ENCODE measurements at regions of chr17 and their contacts with region 1.

Region 1: DNA sequence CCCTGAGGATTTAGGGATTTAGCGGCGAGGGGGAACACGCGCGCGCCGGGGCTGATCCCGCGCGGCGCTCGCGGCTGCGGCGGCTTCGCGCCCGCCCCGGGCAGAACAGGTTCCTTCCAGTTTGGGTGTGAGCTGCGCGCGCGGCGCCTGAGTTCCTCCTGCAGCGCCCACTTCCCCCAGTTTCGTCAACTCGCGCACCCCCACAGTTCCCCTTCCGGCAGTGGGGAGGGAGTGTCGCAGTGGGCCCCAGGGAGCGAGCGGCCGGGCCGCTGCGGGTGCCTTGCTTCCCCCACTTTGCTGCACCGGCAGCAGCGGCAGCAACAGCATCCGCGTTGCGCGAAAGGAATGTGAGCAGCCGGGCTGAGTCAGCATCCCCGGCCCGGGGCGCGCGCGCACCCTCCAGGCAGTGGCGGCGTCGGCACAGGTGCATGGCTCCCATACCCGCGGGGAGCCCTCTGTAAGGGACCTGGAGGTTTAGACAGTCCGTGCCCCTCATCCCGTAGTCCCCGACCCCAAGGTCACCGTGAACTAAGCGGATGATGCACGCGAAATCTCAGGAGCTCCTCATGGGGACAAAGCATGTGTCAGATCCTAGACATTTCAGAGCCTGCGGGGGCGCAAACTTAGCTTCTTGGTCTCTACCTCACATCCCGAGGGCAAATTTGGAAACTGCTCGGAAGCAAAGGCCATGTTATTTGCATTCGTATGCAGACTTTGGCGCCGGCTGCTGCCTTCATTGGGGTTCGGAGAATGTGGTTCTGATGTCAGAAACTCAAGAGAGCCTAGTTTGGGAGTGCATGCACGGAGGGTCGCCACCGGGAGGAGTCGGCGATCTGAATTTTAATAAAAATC is 775 bp downstream of the ARSG start:
- DNase-seq: peak; percentile 84
- H3K4me3 ChIP-seq: peak overlapping the region; percentile 29 to 57 (median 44)
- H3K27ac ChIP-seq: peak overlapping the region; percentile 71 to 81 (median 75)
- H3K4me1 ChIP-seq: peaks cover 0 to 28% (median 23%) of the 10 kb centered on the region in 4 donors
- H3K27me3 ChIP-seq: peaks cover 80% of the 10 kb centered on the region
- CTCF ChIP-seq: no peak
- EP300 ChIP-seq: no peak
- POLR2A ChIP-seq: peak; percentile 63

Region 2: GRCh38 chr17:68341482-68341881 is 49.4 kb after region 1 on chr17:
- in situ Hi-C with region 1: no loop called
- intact Hi-C with region 1: loop called (anchors 2 kb)
- DNase-seq: no peak
- H3K4me3 ChIP-seq: no peak overlapping the region
- H3K27ac ChIP-seq: no peak overlapping the region
- H3K4me1 ChIP-seq: peaks cover 0 to 3% (median 0%) of the 10 kb centered on the region in 4 donors
- H3K27me3 ChIP-seq: no peaks in the 10 kb centered on the region
- CTCF ChIP-seq: no peak
- EP300 ChIP-seq: no peak
- POLR2A ChIP-seq: no peak

Region 3: GRCh38 chr17:68584581-68585303 is 292.7 kb after region 1 on chr17:
- in situ Hi-C with region 1: no loop called
- intact Hi-C with region 1: no loop called
- DNase-seq: no peak
- H3K4me3 ChIP-seq: no peak overlapping the region
- H3K27ac ChIP-seq: no peak overlapping the region
- H3K4me1 ChIP-seq: no peaks in the 10 kb centered on the region
- H3K27me3 ChIP-seq: no peaks in the 10 kb centered on the region
- CTCF ChIP-seq: no peak
- EP300 ChIP-seq: no peak
- POLR2A ChIP-seq: no peak

Measured in transverse colon (tissue), 4 donors.